Head of caudate nucleus (tissue), 42 donors: ENCODE measurements at regions of chr4 and their contacts with region 1.

Region 1: GRCh38 chr4:109815151-109816081 is at the start of gene GAR1:
- DNase-seq: peak; percentile 85 to 96 (median 91)

Region 2: DNA sequence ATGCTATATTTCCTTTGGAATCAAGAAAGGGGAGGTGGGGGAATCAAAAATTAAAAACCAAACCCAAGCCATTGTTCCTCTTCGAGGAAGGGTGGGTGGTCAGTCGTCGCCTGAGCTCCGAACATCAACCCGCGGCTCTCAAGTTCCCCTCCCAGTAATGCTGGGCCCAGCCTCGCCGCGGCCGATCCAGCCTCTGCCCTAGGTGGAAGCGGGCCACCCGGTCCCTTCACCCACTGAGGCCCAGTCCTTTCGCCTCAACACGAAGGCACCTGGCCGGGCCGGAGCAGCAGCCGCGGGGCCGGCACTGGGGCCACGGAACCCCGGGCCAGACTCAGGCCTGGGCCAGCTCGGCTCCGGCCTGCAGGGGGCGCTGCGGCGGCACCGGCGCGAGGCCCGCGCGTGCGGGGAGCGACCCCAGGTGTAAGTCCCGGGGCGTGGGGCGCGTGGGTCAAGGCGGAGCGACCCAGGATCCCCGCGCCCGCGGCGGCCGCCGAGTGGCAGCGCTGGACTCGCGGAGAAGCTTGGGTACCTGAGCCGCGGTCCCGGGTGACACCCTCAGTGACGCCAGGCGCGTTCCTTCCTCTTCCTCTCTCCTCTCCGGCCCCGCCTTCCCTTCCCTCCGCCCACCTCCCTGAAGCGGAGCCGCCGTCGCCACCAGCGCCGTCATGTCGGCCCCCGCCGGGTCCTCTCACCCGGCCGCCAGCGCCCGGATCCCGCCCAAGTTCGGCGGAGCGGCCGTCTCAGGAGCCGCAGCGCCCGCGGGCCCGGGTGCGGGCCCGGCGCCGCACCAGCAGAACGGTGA is 382.0 kb before region 1 on chr4 and contains the start of gene SEC24B:
- intact Hi-C with region 1: loop called (anchors 5 kb)
- DNase-seq: peak; percentile 65 to 96 (median 87)

Region 3: GRCh38 chr4:109702950-109703663 is 112.3 kb before region 1 on chr4 and contains the start of gene CASP6:
- intact Hi-C with region 1: loop called (anchors 10 kb)
- DNase-seq: peak; percentile 30 to 88 (median 78)

Region 4: DNA sequence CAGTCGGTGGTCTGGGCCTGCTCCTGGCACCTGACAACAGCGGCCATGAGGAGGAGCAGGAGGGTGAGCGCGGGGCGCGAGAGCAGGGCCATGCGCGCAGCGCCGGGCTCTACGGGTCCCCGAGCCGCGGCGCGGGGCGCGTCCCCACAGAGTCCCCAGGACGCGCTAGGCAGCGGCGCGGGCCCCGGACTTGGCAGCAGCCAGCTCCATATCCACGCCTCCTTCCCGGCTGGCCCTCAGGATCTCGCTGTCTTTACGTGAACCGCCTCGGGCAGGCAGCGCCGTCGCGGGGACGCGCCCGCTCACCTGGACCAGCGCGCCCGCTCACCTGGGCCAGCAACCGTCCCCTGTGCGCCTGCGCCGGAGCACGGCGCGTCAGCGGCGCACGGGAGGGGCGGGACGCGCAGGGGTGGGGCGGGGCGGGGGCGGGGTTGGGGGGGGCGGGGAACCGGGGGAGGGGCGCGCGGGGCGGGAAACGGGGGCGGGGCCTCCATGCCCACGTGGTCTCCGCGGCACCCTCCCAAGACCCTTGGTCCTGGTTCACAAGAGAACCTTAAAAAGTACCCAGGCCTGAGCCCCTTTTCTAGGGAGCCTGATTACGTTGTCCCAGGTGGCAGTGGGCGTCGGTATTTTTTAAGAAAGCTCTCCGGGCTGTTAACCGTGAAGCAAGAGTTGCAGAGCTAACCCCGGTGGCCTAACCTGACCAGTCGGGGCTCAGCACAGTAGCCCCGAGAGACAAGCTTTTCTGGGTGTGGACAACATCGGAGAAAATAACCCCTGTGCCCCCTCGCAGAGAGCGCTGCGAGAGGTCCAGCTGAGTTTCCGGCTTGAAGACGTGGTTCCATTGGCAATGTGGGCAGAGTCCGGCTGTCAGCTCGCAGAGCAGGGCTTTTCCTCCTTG is 85.4 kb before region 1 on chr4 and contains the start of gene PLA2G12A:
- intact Hi-C with region 1: loop called (anchors 10 kb)
- DNase-seq: peak; percentile 20 to 85 (median 72)